Aorta (tissue), 5 donors: ENCODE measurements at regions of chr12 and their contacts with region 1.

Region 1: GRCh38 chr12:113980537-113981337 is 14.6 kb upstream of the RBM19 start:
- DNase-seq: peak in 1 of 2 donors; percentile 51
- ATAC-seq: peak; percentile 72
- H3K4me3 ChIP-seq: no peak overlapping the region
- H3K27ac ChIP-seq: no peak overlapping the region
- H3K4me1 ChIP-seq: no peaks in the 10 kb centered on the region
- H3K27me3 ChIP-seq: no peaks in the 10 kb centered on the region

Region 2: DNA sequence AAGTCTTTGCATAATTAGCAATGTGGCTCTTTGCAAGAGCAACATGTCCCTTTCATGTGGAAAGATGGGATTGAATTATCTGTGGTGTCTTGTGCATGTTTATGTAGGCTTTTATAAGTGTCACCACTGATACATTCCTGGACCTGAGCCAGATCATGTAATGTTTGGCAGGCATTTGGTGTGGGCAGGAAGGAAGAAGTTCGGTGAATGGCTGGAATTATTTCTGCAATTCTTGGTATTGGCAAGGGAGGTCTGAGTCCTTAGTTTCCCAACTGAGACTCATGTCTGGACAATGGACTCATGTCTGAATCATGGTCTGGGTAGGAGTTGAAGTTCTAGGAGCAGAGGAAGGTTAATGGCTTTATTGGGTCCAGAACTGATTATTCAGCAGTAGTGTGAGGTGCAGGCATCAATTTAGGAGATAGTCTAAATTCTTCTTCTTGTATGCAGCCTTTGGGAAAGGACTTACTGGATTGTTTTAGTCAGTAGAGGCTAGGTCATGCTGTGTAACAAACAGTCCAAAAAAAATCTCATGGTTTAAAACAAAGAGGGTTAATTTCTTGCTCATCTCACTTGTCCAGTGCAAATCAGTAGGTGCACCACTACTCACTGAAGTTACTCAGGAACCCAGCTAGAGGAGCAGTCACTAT is 322.6 kb before region 1 on chr12:
- intact Hi-C with region 1: no loop called
- DNase-seq: no peak
- ATAC-seq: no peak
- H3K4me3 ChIP-seq: no peak overlapping the region
- H3K27ac ChIP-seq: no peak overlapping the region
- H3K4me1 ChIP-seq: no peaks in the 10 kb centered on the region
- H3K27me3 ChIP-seq: peaks cover 0 to 2% of the 10 kb centered on the region in 2 donors

Region 3: DNA sequence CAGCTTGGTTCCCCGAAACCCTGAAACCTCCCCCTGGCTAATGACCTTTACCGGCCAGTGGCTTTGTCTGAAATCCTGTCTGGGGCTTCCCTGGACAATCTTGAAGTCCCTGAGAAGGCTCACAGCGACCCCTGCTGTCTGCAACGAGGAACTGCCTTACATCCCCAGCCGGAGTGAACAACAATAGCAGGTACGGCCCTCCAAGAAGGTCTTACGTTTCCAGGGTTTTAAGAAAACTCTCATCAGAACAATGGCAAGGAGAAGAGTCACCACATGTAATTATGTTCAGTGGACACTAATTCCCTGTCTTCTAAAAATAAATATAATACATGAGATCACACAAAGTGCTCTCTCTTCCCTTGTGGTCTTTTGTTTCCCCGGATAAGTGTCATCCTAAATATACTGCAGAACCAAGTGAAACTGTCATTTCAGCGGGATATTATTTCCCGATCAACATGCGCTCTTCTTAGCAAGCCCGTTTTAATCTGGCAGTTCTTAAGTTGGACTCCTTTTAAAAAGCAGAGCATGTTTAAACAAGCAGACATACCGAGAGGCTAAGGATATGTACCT is 67.9 kb before region 1 on chr12:
- intact Hi-C with region 1: no loop called
- DNase-seq: peak in 1 of 2 donors; percentile 61
- ATAC-seq: no peak
- H3K4me3 ChIP-seq: no peak overlapping the region
- H3K27ac ChIP-seq: no peak overlapping the region
- H3K4me1 ChIP-seq: no peaks in the 10 kb centered on the region
- H3K27me3 ChIP-seq: no peaks in the 10 kb centered on the region

Region 4: GRCh38 chr12:114508529-114509129 is 527.9 kb after region 1 on chr12:
- intact Hi-C with region 1: loop called (anchors 2 kb)
- DNase-seq: peak; percentile 68 to 79
- ATAC-seq: peak; percentile 65
- H3K4me3 ChIP-seq: no peak overlapping the region
- H3K27ac ChIP-seq: no peak overlapping the region
- H3K4me1 ChIP-seq: no peaks in the 10 kb centered on the region
- H3K27me3 ChIP-seq: no peaks in the 10 kb centered on the region

Region 5: DNA sequence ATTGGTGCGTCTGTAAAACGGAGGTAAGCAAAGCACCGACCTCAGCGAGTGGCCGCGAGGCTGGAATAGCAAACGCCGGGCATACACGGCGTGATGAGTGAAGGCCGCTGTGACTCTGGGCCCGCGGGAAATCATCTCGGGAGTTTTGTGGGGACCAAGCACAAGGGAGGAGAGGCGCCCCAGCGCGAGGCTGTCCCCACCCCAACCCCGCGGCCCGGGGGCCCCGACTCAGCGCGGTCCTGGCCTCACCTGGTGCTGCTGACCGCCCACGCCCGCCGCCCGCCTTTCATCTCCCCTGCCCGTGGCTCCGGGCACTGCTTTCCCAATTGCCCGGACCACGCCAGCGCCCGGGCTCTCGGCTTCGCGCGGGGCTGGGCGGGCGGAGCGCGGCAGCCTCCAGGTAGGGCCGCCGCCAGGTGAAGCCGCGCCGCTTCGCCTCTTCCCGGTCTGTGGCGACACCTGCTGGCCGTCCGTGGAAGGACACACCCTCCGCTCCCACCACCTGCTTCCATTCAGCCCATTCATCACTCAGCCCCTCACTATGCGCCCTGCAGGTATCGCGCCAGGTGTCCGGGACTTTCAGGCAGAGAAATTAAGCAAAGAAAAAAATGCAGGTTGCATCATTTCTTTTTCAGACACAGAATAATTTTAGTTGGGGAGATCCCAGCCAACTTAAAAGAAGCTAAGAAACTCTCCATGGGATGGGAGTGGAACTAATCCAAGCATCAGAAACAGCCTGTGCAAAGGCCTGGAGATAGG is 1936.4 kb after region 1 on chr12:
- intact Hi-C with region 1: loop called (anchors 10 kb)
- DNase-seq: peak; percentile 62 to 89
- ATAC-seq: peak; percentile 74
- H3K4me3 ChIP-seq: no peak overlapping the region
- H3K27ac ChIP-seq: no peak overlapping the region
- H3K4me1 ChIP-seq: no peaks in the 10 kb centered on the region
- H3K27me3 ChIP-seq: no peaks in the 10 kb centered on the region